Activated CD4-positive, alpha-beta memory T cell treated with anti-CD3 and anti-CD28 coated beads for 36 hours (primary cell): ENCODE measurements at regions of chr2 and their contacts with region 1.

Region 1: DNA sequence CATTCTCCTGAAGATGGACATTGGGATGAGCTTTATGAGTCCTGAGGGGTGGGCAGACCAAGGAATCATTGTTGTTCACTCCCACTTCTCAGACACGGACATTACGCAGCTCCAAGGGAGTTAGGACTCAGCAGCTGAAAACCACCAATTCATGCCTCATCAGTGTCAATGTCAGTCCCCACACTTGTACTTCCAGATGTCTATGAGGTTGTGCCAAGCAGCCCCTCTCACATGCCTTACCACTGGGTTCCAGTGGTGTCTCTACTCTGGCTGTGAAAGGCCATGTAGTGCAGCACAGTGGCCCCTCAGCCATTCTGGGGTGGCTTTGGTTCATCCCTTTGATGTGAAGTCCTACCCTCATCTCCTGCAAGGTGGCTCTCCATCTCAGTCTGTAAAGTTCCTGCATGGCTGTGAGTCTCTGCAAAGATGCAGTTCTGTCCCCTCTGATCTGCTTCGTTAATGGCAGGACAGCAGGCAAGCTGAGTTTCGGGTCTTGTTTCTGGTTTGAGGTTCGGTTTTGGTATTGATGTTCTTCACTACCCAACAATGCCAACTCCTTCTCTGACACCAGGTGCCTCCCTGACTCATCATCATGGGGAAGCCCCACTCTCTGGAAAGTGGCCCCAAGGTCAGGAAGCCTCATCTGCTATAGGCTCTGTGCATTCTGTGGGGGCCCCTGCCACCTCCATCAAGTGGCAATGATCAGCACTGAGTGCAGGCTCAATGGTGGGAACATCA is 14.0 kb upstream of the COL6A3 start:
- DNase-seq: peak; percentile 92
- H3K4me3 Mint-ChIP-seq: peak overlapping the region; percentile 55
- H3K27ac Mint-ChIP-seq: peak overlapping the region; percentile 91
- H3K4me1 Mint-ChIP-seq: peaks cover 72% of the 10 kb centered on the region
- H3K27me3 Mint-ChIP-seq: peaks cover 1% of the 10 kb centered on the region

Region 2: DNA sequence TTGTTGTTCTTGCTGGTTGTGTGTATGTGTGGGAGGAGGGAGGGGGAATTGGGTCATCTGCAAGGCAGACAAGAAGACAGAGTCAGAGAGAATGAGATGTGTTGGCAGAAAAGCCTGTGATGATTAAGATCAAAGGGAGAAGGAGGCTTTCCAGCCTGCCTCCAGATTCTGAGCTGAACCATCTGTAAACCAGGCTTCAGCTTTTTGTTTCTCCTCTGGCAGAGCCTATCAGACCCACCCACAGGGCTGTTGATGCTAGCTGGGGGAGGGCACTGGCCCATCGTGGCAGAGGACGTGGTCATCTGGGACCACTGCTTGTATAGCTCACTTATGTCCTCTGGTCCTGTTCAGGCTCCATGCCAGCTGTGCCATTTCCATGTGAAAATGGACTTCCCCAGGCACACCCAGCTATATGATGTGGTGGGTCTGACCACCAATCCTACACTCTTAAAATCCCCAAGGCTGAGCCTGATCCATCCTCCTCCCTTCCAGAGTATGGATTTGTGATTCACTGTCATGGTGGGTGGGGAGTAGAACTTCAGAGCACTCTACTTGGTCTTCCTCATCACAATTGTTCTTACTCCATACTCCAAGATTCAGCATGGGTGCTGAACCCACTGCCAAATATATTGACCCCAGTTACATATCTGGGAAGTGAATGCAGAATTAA is 13.8 kb after region 1 on chr2:
- CTCF ChIA-PET with region 1: interaction called, 62 read pairs
- POLR2A ChIA-PET with region 1: interaction called, 90 read pairs
- intact Hi-C with region 1: loop called (anchors 1 kb)
- DNase-seq: peak; percentile 69
- H3K4me3 Mint-ChIP-seq: peak overlapping the region; percentile 40
- H3K27ac Mint-ChIP-seq: peak overlapping the region; percentile 98
- H3K4me1 Mint-ChIP-seq: peaks cover 73% of the 10 kb centered on the region
- H3K27me3 Mint-ChIP-seq: peaks cover 2% of the 10 kb centered on the region

Region 3: DNA sequence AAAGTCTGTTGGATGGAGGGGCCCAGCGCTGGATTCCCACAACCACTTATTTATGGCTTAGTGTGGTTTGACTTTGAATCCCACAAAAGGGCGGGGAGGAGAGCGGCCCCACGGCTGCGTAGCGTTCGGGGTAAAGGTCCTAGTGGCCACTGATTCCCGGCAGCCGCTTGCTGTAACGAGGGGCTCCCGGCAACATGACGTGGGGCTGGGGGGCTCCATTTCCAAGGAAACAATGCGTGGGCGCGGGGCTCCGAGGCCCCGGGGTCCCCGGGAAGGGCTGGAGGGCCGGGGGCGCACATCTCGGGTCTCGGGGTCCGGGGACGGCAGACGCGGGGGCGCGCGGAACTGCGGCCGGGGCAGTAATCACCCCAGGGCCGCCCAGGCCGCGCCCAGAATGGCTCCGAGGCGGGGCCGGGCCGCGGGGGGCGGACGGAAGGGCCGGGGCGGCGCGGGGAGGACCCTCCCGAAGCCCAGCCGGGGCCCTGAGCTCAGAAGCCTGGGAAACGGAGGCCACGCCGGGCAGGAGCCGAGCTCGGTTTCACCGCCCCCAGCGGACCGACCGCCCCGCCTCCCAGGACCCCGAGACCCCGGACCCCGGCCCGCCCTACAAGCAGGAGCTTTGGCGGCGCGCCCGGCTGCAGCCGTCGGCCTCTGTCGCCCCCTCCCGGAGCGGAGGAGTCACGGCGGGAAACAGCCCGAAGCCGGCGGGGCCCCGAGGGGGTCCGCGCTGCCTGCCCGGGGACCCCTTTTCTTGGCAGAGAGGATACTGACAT is 47.2 kb after region 1 on chr2:
- CTCF ChIA-PET with region 1: interaction called, 208 read pairs
- POLR2A ChIA-PET with region 1: interaction called, 7 read pairs
- intact Hi-C with region 1: loop called (anchors 2 kb)
- DNase-seq: peak; percentile 79
- H3K4me3 Mint-ChIP-seq: peak overlapping the region; percentile 68
- H3K27ac Mint-ChIP-seq: peak overlapping the region; percentile 78
- H3K4me1 Mint-ChIP-seq: peaks cover 10% of the 10 kb centered on the region
- H3K27me3 Mint-ChIP-seq: peaks cover 18% of the 10 kb centered on the region

Region 4: GRCh38 chr2:237581751-237582746 is 154.1 kb after region 1 on chr2:
- CTCF ChIA-PET with region 1: no interaction called
- POLR2A ChIA-PET with region 1: no interaction called
- intact Hi-C with region 1: loop called (anchors 5 kb)
- DNase-seq: peak; percentile 80
- H3K4me3 Mint-ChIP-seq: no peak overlapping the region
- H3K27ac Mint-ChIP-seq: no peak overlapping the region
- H3K4me1 Mint-ChIP-seq: peaks cover 5% of the 10 kb centered on the region
- H3K27me3 Mint-ChIP-seq: no peaks in the 10 kb centered on the region

Region 5: GRCh38 chr2:237592425-237592980 is 164.6 kb after region 1 on chr2:
- CTCF ChIA-PET with region 1: no interaction called
- POLR2A ChIA-PET with region 1: no interaction called
- intact Hi-C with region 1: no loop called
- DNase-seq: no peak
- H3K4me3 Mint-ChIP-seq: no peak overlapping the region
- H3K27ac Mint-ChIP-seq: no peak overlapping the region
- H3K4me1 Mint-ChIP-seq: peaks cover 5% of the 10 kb centered on the region
- H3K27me3 Mint-ChIP-seq: no peaks in the 10 kb centered on the region

Region 6: DNA sequence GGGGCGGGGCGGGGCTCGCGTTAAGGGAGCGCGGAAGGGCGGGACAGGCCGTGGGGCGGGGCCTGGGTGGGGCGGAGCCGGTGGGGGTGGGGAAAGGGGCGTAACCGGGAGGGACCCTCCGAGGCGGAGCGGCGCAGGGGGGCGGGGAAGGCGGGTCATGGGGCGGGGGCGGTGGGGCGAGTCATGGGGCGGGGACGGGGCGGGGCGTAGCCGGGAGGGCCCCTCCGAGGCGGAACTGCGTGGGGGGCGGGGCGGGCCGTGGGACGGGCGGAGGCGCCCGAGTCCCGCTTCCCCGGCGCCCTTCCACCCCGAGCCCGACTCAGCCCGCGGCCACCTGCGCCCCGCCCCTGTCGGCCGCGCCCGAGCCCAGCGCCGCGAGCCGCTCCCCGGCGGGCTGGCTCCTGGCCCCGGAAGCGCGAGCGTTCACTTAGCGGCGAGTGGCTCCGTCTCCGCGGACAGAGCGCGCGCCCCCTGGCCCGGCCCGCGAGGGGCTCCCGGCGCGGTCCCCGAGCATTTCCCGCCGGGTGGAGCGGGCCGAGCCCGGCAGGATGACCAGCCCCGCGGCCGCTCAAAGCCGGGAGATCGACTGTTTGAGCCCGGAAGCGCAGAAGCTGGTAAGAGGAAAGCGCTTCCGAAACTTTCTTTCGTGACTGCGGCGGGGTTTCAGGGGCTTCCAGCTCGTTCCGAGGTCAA is 264.1 kb after region 1 on chr2:
- CTCF ChIA-PET with region 1: no interaction called
- POLR2A ChIA-PET with region 1: no interaction called
- intact Hi-C with region 1: loop called (anchors 2 kb)
- DNase-seq: peak; percentile 96
- H3K4me3 Mint-ChIP-seq: peak overlapping the region; percentile 98
- H3K27ac Mint-ChIP-seq: peak overlapping the region; percentile 99
- H3K4me1 Mint-ChIP-seq: peaks cover 62% of the 10 kb centered on the region
- H3K27me3 Mint-ChIP-seq: no peaks in the 10 kb centered on the region

Region 7: DNA sequence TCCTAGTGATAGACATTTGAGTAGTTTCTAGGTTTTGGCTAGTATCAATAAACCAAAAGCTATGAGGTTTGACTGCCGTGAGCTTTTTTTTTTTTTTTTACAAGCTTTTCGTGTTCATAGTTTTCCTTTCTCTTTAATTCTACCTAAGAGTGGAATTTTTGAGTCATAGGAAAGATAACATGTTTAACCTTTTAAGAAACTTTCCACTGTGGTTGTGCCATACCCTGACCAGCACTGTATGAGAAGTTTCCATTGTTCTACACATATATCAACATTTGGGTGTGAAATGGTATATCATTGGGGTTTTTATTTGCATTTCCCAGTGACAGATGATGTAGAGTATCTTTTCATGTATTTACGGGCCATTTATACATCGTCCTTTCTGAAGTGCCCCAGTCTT is 570.6 kb after region 1 on chr2:
- CTCF ChIA-PET with region 1: no interaction called
- POLR2A ChIA-PET with region 1: no interaction called
- intact Hi-C with region 1: loop called (anchors 5 kb)
- DNase-seq: peak; percentile 65
- H3K4me3 Mint-ChIP-seq: peak overlapping the region; percentile 62
- H3K27ac Mint-ChIP-seq: peak overlapping the region; percentile 93
- H3K4me1 Mint-ChIP-seq: peaks cover 57% of the 10 kb centered on the region
- H3K27me3 Mint-ChIP-seq: no peaks in the 10 kb centered on the region